HEK293 (cell line): ENCODE measurements at regions of chr5 and their contacts with region 1.

Region 1: DNA sequence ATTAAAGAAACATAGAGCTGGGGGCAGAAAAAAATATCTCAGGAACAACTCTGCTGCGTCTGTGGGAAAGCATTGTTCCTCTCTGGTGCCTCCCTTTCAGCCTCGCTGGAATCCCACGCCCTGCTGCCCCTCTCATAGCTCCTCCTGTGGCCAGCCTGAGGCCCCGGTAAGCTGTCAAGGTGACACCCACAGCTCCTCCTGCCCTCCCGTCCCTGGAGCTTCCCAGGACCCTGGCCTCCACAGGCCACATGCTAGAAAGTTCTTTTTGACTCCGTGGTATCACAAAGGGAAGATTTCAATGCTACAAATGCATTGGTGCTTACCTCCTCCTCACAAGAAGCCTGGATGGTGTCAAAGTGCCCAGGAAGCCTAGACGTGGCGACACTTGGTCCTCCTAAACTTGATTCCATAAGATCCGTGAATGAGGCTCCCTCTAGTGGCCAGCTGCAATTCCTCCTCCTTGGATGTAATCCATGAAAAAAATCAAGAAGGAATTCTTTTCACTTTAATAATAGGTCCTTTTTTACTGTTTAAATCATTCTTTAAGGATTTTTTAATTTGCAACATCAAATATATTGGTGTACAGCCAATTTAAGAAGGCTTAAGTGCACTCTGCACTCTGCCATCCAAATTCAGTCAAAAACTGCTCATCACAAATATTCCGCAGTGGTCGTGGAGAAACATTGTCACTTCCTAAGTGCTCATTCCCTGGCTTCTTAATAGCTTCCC is 104.9 kb downstream of the CFAP90 start:
- H3K4me3 ChIP-seq: no peak overlapping the region
- H3K27ac ChIP-seq: no peak overlapping the region
- H3K4me1 ChIP-seq: no peaks in the 10 kb centered on the region
- CTCF ChIP-seq: peak; percentile 60

Region 2: DNA sequence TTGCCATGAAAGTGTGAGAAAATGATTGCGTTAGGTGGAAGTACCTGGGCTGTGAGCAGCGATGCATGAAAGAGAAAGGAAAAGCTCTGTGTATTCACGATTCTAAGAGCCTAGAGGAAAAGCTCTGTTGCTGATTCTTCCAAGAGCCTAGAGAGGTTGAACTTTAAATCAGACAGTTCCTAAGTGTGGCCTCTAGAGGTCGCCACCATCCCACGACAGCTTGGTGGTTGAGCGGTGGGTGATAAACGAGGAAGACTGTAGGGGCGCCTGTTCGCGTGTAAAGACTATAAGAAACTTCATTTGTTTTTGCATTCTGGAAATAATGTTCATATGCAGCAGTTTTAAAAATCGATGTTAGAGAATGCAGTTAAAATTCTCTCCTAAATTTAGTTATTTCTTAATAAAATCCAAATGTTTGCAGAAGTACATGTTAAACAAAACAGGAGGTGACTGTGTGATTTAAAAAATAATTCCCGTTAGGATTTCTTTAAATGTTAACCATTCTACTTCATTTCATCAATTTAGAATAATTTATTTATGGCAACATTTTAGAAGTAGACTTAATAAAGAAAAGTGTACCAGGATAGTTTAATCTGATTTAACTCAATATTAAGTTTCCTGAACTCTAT is 925.1 kb before region 1 on chr5:
- CTCF ChIA-PET with region 1: interaction called, 16 read pairs
- POLR2A ChIA-PET with region 1: no interaction called
- H3K4me3 ChIP-seq: no peak overlapping the region
- H3K27ac ChIP-seq: no peak overlapping the region
- H3K4me1 ChIP-seq: no peaks in the 10 kb centered on the region
- CTCF ChIP-seq: peak; percentile 41; the same call in 1 of the 2 replicates

Region 3: GRCh38 chr5:7261049-7261448 is 485.0 kb before region 1 on chr5:
- CTCF ChIA-PET with region 1: interaction called, 22 read pairs
- POLR2A ChIA-PET with region 1: no interaction called
- H3K4me3 ChIP-seq: no peak overlapping the region
- H3K27ac ChIP-seq: no peak overlapping the region
- H3K4me1 ChIP-seq: no peaks in the 10 kb centered on the region
- CTCF ChIP-seq: peak; percentile 18; the same call in 1 of the 2 replicates

Region 4: GRCh38 chr5:7391814-7392692 is 354.0 kb before region 1 on chr5:
- CTCF ChIA-PET with region 1: interaction called, 38 read pairs
- POLR2A ChIA-PET with region 1: interaction called, 3 read pairs
- H3K4me3 ChIP-seq: no peak overlapping the region
- H3K27ac ChIP-seq: no peak overlapping the region
- H3K4me1 ChIP-seq: peaks cover 2% of the 10 kb centered on the region; the same call in 1 of the 2 replicates
- CTCF ChIP-seq: 0 out of 2 replicates have a peak, but pooled peaks have one; percentile 11

Region 5: GRCh38 chr5:7615566-7616061 is 130.4 kb before region 1 on chr5:
- CTCF ChIA-PET with region 1: interaction called, 11 read pairs
- POLR2A ChIA-PET with region 1: no interaction called
- H3K4me3 ChIP-seq: no peak overlapping the region
- H3K27ac ChIP-seq: no peak overlapping the region
- H3K4me1 ChIP-seq: no peaks in the 10 kb centered on the region
- CTCF ChIP-seq: no peak

Region 6: DNA sequence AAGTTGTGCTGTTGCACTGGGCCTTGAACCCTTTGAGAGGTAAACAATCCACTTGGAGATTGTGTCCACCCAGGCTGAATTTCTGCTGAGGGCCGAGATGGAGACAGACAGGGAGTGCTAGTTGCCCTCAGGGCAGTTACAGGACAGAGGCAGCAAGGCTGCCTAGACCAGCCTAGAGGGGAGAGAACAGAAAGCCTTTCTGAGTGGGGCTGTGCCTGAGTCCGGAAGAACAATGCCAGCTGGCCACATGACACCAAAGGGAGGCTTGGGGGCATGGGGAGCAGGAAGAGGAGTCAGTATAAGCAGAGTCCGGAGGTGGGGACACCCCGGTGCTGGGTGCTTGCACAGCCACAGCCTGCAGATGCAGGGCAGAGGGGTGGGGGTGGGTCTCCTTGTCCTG is 40.8 kb before region 1 on chr5:
- CTCF ChIA-PET with region 1: interaction called, 11 read pairs
- POLR2A ChIA-PET with region 1: no interaction called
- H3K4me3 ChIP-seq: no peak overlapping the region
- H3K27ac ChIP-seq: no peak overlapping the region
- H3K4me1 ChIP-seq: no peaks in the 10 kb centered on the region
- CTCF ChIP-seq: no peak

Region 7: GRCh38 chr5:7770436-7770835 is 24.4 kb after region 1 on chr5:
- CTCF ChIA-PET with region 1: interaction called, 11 read pairs
- POLR2A ChIA-PET with region 1: no interaction called
- H3K4me3 ChIP-seq: no peak overlapping the region
- H3K27ac ChIP-seq: no peak overlapping the region
- H3K4me1 ChIP-seq: no peaks in the 10 kb centered on the region
- CTCF ChIP-seq: no peak